PC-9 (cell line): ENCODE measurements at regions of chr15 and their contacts with region 1.

Region 1: DNA sequence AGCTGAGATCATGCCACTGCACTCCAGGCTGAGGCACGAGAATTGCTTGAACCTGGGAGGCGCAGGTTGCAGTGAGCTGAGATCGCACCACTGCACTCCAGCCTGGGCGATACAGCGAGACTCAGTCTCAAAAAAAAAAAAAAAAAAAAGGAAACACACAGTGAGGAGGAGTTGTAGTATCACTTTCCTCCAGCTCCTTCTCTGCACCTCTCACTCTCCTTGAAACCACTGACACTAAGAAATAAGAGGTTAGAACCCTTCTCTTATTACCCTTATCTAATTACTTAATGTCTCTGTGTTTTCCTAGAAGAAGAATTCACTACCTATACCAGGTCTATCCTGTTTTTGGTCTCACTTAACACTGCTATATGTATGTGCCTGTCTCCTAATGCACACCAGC is 31.7 kb downstream of the RAB27A start:
- DNase-seq: no peak
- H3K4me3 ChIP-seq: no peak overlapping the region
- H3K27ac ChIP-seq: no peak overlapping the region
- H3K4me1 ChIP-seq: no peaks in the 10 kb centered on the region
- H3K27me3 ChIP-seq: no peaks in the 10 kb centered on the region
- CTCF ChIP-seq: no peak

Region 2: GRCh38 chr15:55221090-55222011 is 36.6 kb before region 1 on chr15:
- CTCF ChIA-PET with region 1: no interaction called
- POLR2A ChIA-PET with region 1: interaction called, 27 read pairs
- intact Hi-C with region 1: no loop called
- DNase-seq: peak; percentile 33 to 92
- H3K4me3 ChIP-seq: peak overlapping the region; percentile 31; the same call in 1 of the 2 replicates
- H3K27ac ChIP-seq: peak overlapping the region; percentile 84
- H3K4me1 ChIP-seq: peaks cover 23% of the 10 kb centered on the region
- H3K27me3 ChIP-seq: no peaks in the 10 kb centered on the region
- CTCF ChIP-seq: no peak